Sigmoid colon (tissue), 7 donors: ENCODE measurements at regions of chr19 and their contacts with region 1.

Region 1: DNA sequence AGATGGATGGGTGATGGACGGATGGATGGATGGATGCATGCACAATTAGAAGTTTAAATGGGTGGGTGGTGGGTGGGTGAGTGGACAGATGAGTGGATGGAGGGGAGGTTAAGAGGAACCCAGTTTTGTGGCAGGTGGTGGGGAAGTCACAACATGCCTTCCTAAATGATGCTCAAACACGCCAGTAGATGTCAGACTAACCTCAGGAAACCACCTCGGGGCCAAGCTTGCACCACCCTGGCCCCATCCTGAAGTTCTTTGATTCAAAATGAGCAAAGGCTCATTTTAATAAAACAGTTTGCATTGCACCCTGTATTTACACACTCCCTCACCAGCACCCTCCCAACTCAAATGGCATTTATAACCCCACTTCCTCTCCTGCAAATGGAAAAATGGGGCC is 91.4 kb upstream of the CACNA1A start:
- DNase-seq: peak; percentile 70
- H3K4me3 ChIP-seq: no peak overlapping the region
- H3K27ac ChIP-seq: no peak overlapping the region
- H3K4me1 ChIP-seq: no peaks in the 10 kb centered on the region
- H3K27me3 ChIP-seq: peaks cover 0 to 14% (median 0%) of the 10 kb centered on the region in 3 donors
- CTCF ChIP-seq: peak; percentile 40 to 52 (median 48)
- EP300 ChIP-seq: no peak
- POLR2A ChIP-seq: no peak

Region 2: DNA sequence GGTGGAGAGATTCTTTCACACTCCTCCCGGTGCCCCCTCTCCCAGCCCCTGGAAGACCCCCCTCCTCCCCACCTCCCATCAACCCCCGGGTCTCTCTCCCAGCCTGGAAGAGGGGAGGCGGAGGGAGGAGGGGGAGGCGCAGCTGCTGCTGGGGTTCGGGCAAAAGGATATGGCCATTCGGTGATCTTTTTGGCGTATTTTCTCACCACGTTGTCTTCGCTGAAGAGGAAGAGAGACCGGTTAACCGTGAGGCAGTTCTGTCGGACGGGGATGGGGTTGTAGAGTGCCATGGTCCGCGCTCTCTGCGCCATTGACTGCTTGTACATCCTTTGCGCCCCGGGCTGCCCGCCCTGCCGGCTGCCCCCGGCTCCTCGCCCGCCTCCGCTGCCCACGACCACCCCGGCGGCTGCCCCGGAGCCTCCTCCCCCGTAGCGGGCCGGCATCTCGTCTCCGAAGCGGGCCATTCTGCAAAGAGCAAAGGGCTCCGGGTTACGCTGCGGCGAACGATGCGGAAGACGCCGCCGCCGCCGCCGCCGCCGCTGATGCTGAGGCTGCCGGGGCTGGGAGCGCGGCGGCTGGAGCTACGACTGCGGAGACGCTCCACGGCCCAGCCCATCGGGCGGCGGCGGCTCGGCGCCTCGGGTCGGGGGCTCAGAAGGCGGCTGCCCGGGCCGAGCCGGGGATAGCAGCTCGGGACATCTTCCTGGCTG is 91.7 kb before region 1 on chr19:
- intact Hi-C with region 1: no loop called
- DNase-seq: no peak
- H3K4me3 ChIP-seq: peak overlapping the region in 3 of 4 donors; percentile 12 to 44 (median 40)
- H3K27ac ChIP-seq: no peak overlapping the region
- H3K4me1 ChIP-seq: peaks cover 0 to 13% (median 11%) of the 10 kb centered on the region in 4 donors
- H3K27me3 ChIP-seq: peaks cover 22 to 81% (median 45%) of the 10 kb centered on the region in 3 donors
- CTCF ChIP-seq: no peak
- EP300 ChIP-seq: no peak
- POLR2A ChIP-seq: no peak

Region 3: GRCh38 chr19:13718733-13719132 is 121.1 kb after region 1 on chr19:
- intact Hi-C with region 1: loop called (anchors 5 kb)
- DNase-seq: no peak
- H3K4me3 ChIP-seq: no peak overlapping the region
- H3K27ac ChIP-seq: no peak overlapping the region
- H3K4me1 ChIP-seq: no peaks in the 10 kb centered on the region
- H3K27me3 ChIP-seq: peaks cover 0 to 11% (median 0%) of the 10 kb centered on the region in 3 donors
- CTCF ChIP-seq: no peak
- EP300 ChIP-seq: no peak
- POLR2A ChIP-seq: no peak

Region 4: GRCh38 chr19:13861732-13862531 is 264.3 kb after region 1 on chr19:
- intact Hi-C with region 1: loop called (anchors 2 kb)
- DNase-seq: peak; percentile 97
- H3K4me3 ChIP-seq: peak overlapping the region; percentile 11 to 52 (median 40)
- H3K27ac ChIP-seq: peak overlapping the region; percentile 89 to 97 (median 93)
- H3K4me1 ChIP-seq: peaks cover 0 to 39% (median 26%) of the 10 kb centered on the region in 4 donors
- H3K27me3 ChIP-seq: no peaks in the 10 kb centered on the region
- CTCF ChIP-seq: peak; percentile 98 to 100 (median 99)
- EP300 ChIP-seq: peak in 2 of 4 donors; percentile 5 to 31
- POLR2A ChIP-seq: peak; percentile 25 to 32

Region 5: GRCh38 chr19:13880059-13881043 is 282.7 kb after region 1 on chr19:
- intact Hi-C with region 1: loop called (anchors 5 kb)
- DNase-seq: peak; percentile 99
- H3K4me3 ChIP-seq: peak overlapping the region in 3 of 4 donors; percentile 24 to 37 (median 33)
- H3K27ac ChIP-seq: peak overlapping the region; percentile 67 to 76 (median 72)
- H3K4me1 ChIP-seq: peaks cover 0 to 30% (median 18%) of the 10 kb centered on the region in 4 donors
- H3K27me3 ChIP-seq: no peaks in the 10 kb centered on the region
- CTCF ChIP-seq: peak; percentile 98 to 100 (median 99)
- EP300 ChIP-seq: peak in 1 of 4 donors; percentile 20
- POLR2A ChIP-seq: no peak

Region 6: DNA sequence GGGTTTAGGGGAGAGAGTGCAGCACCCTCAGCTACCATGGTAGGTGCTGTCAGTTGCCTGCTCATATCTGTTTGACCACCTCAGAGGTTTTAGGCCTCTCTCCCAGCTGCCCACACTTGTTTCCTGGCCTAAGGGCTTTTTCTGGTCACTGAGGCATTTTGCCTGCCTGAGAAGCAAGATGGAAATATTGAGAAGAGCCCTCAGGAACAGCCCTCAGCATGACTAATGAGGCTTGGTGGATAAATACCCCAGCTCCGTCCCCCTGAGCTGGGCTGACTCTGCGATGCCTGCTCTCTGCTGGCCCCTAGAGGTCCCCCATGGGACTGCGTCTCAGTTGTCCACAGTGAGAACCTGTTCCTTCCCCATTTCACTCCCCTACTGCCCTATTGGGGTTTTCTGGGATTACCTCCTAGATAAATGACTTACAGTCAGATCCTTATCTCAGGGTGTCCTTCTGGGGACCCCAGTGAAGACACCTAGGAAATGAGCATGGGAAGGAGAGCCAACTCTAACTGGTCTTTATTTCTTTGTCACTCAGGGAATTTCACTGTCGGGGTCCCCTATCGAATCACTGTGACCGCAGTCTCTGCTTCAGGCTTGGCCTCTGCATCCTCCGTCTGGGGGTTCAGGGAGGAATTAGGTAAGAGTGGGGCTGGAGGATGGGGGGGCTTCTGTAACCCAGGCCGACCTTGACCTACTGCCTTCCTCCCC is 451.0 kb after region 1 on chr19:
- intact Hi-C with region 1: loop called (anchors 10 kb)
- DNase-seq: no peak
- H3K4me3 ChIP-seq: no peak overlapping the region
- H3K27ac ChIP-seq: no peak overlapping the region
- H3K4me1 ChIP-seq: no peaks in the 10 kb centered on the region
- H3K27me3 ChIP-seq: no peaks in the 10 kb centered on the region
- CTCF ChIP-seq: peak in 3 of 4 experiments; percentile 47 to 67 (median 48)
- EP300 ChIP-seq: no peak
- POLR2A ChIP-seq: no peak